ENCODE measurements at regions of chr5 and their contacts with region 1.

Region 1: DNA sequence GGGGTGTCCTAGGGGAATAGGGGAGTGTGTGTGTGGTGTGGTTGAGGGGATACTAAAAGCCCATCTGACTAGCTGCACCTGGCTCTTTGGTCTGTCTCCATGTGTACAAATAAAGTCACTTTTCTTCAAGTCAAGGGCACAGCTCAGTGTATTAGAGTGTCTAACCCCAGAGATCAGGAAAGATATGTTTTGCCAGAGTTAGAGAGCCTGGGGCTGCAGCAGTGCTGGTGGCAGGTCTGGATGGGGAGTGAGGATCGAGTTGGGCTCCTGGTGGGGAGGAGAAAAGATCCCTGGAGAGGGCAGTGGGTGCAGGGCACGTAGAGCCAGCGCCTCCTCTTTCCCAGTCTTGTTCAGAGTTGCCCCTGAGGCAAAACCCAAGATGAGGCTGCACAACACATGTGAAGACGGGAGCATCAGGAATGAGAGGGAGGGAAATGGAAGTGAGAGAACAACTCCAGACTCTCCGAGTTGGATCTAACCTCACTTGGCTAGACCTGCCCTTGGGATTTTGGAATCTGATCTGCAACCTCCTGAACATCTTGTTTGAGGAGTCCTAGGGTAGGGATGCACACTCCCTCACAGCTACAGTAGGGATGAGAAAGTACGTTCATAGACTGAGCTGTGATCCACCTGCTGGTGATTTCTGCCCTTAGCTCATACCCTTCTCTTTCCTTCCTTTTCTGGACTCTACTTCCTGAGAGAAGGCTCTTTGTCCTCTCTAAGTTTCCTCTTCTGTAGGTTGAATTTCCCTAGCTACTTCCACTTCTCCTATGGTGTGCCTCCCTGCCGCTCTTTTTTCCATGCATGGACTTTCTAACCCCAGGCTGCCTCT is 309.9 kb downstream of the ZSWIM6 start:
- DNase-seq: no peak
- H3K4me3 ChIP-seq: no peak overlapping the region
- H3K27ac ChIP-seq: no peak overlapping the region
- H3K4me1 ChIP-seq: no peaks in the 10 kb centered on the region
- H3K27me3 ChIP-seq: no peaks in the 10 kb centered on the region
- CTCF ChIP-seq: peak in 1 of 6 experiments; percentile 31
- POLR2A ChIP-seq: no peak

Region 2: GRCh38 chr5:60960591-60960990 is 681.4 kb before region 1 on chr5:
- intact Hi-C with region 1: loop called in 1 of 2 experiments (anchors 10 kb)
- DNase-seq: no peak
- H3K4me3 ChIP-seq: no peak overlapping the region
- H3K27ac ChIP-seq: no peak overlapping the region
- H3K4me1 ChIP-seq: no peaks in the 10 kb centered on the region
- H3K27me3 ChIP-seq: no peaks in the 10 kb centered on the region
- CTCF ChIP-seq: peak in 5 of 6 experiments; percentile 28 to 55 (median 38)
- POLR2A ChIP-seq: no peak

Region 3: GRCh38 chr5:62316176-62316502 is 674.2 kb after region 1 on chr5:
- intact Hi-C with region 1: no loop called
- DNase-seq: no peak
- H3K4me3 ChIP-seq: no peak overlapping the region
- H3K27ac ChIP-seq: no peak overlapping the region
- H3K4me1 ChIP-seq: peaks cover 5 to 13% of the 10 kb centered on the region in 2 donors
- H3K27me3 ChIP-seq: no peaks in the 10 kb centered on the region
- CTCF ChIP-seq: no peak
- POLR2A ChIP-seq: no peak

Measured in adrenal gland (tissue), 19 donors.